ENCODE measurements at regions of chr3 and their contacts with region 1.

Region 1: GRCh38 chr3:46214751-46215352 is 6.7 kb upstream of the CCR1 start:
- DNase-seq: no peak
- H3K4me3 Mint-ChIP-seq: no peak overlapping the region
- H3K27ac Mint-ChIP-seq: no peak overlapping the region
- H3K4me1 Mint-ChIP-seq: peaks cover 16% of the 10 kb centered on the region
- H3K27me3 Mint-ChIP-seq: peaks cover 54% of the 10 kb centered on the region

Region 2: GRCh38 chr3:46266598-46266997 is 51.7 kb after region 1 on chr3:
- intact Hi-C with region 1: loop called (anchors 5 kb)
- DNase-seq: no peak
- H3K4me3 Mint-ChIP-seq: no peak overlapping the region
- H3K27ac Mint-ChIP-seq: no peak overlapping the region
- H3K4me1 Mint-ChIP-seq: peaks cover 23% of the 10 kb centered on the region
- H3K27me3 Mint-ChIP-seq: peaks cover 66% of the 10 kb centered on the region

Measured in activated T-helper 2 cell treated with anti-CD3 and anti-CD28 coated beads, Interferon-gamma antibody, Interleukin-2, Interleukin-4, amounts not matched to agents 10 μg/mL and 5 μg/mL and 100 μg/mL, durations not matched to agents 14 hours and 24 hours and 36 hours (primary cell).